Activated CD4-positive, alpha-beta T cell treated with anti-CD3 and anti-CD28 coated beads, Interleukin-2, amount 10 ng/mL, durations not matched to agents 24 days and 14 days (primary cell): ENCODE measurements at regions of chr1 and their contacts with region 1.

Region 1: DNA sequence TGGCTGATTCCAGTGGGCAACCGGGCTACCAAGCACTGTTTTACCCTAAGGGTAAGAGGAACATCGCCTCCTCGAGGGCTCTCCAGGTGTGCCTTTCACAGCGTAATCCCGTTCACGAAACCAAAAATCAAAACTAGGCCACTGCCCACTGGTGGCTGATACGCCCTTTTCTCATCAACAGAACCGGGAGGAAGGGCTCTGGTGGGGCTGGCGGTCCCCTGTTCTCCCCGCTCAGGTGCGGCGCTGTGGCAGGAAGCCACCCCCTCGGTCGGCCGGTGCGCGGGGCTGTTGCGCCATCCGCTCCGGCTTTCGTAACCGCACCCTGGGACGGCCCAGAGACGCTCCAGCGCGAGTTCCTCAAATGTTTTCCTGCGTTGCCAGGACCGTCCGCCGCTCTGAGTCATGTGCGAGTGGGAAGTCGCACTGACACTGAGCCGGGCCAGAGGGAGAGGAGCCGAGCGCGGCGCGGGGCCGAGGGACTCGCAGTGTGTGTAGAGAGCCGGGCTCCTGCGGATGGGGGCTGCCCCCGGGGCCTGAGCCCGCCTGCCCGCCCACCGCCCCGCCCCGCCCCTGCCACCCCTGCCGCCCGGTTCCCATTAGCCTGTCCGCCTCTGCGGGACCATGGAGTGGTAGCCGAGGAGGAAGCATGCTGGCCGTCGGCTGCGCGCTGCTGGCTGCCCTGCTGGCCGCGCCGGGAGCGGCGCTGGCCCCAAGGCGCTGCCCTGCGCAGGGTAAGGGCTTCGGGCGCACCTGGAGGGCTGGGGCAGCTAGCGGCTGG is at the start of gene IL6R:
- DNase-seq: peak; percentile 90
- H3K4me3 Mint-ChIP-seq: peak within 1 kb of the TSS; percentile 86
- H3K27ac Mint-ChIP-seq: peak within 1 kb of the TSS; percentile 81
- H3K4me1 Mint-ChIP-seq: peaks cover 64% of the 10 kb centered on the region
- H3K27me3 Mint-ChIP-seq: peaks cover 2% of the 10 kb centered on the region
- total RNA-seq, gene IL6R: 3.0 and 3.3 TPM in 2 replicates

Region 2: GRCh38 chr1:154352581-154353459 is 52.4 kb before region 1 on chr1:
- intact Hi-C with region 1: loop called (anchors 2 kb)
- DNase-seq: peak; percentile 80
- H3K4me3 Mint-ChIP-seq: peak overlapping the region; percentile 87
- H3K27ac Mint-ChIP-seq: peak overlapping the region; percentile 65
- H3K4me1 Mint-ChIP-seq: peaks cover 23% of the 10 kb centered on the region
- H3K27me3 Mint-ChIP-seq: no peaks in the 10 kb centered on the region

Region 3: GRCh38 chr1:154419620-154420571 is 14.7 kb after region 1 on chr1:
- intact Hi-C with region 1: loop called (anchors 2 kb)
- DNase-seq: peak; percentile 75
- H3K4me3 Mint-ChIP-seq: peak overlapping the region; percentile 70
- H3K27ac Mint-ChIP-seq: peak overlapping the region; percentile 84
- H3K4me1 Mint-ChIP-seq: peaks cover 35% of the 10 kb centered on the region
- H3K27me3 Mint-ChIP-seq: peaks cover 2% of the 10 kb centered on the region

Region 4: GRCh38 chr1:154463512-154463990 is 58.4 kb after region 1 on chr1:
- intact Hi-C with region 1: loop called (anchors 2 kb)
- DNase-seq: peak; percentile 87
- H3K4me3 Mint-ChIP-seq: peak overlapping the region; percentile 24
- H3K27ac Mint-ChIP-seq: peak overlapping the region; percentile 75
- H3K4me1 Mint-ChIP-seq: peaks cover 42% of the 10 kb centered on the region
- H3K27me3 Mint-ChIP-seq: no peaks in the 10 kb centered on the region

Region 5: DNA sequence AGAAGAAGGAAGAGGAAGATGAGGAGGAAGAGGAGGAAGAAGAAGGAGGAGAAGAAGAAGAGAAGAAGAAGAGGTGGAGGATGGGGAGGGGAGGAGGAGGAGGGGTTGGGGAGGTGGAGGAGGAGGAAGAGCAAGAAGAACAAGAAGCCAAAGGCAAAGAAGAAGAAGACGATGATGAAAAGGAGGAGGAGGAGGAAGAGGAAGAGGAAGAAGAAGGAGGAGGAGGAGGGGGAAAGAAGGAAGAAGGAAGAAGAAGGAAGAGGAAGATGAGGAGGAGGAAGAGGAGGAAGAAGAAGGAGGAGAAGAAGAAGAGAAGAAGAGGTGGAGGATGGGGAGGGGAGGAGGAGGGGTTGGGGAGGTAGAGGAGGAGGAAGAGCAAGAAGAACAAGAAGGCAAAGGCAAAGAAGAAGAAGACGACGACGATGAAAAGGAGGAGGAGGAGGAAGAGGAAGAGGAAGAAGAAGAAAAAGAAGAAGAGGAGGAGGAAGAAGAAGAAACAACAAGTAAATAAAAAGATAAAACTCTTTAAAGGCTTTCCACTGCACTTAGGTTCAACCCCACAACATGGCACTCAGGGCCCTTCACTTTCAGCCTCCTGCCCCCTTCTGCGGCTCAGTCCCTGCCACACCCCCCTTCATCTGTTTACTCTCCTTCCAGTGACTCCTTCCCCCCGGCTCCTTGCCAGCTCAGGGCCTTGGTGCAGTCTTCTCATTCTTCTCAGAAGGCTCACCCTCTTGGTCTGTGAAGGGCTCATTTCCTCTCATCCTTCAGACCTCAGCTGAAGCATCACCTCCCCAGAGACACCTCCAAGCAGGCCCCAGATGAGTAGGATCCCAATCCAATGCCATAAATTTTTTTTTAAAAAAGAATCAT is 350.9 kb after region 1 on chr1:
- intact Hi-C with region 1: loop called (anchors 5 kb)
- DNase-seq: peak; percentile 69
- H3K4me3 Mint-ChIP-seq: peak overlapping the region; percentile 14
- H3K27ac Mint-ChIP-seq: peak overlapping the region; percentile 88
- H3K4me1 Mint-ChIP-seq: peaks cover 72% of the 10 kb centered on the region
- H3K27me3 Mint-ChIP-seq: no peaks in the 10 kb centered on the region